Activated T-helper 1 cell treated with anti-CD3 and anti-CD28 coated beads, Interleukin-12 subunit alpha, Interleukin-12 subunit beta, Interleukin-2, Interleukin-4 antibody, amounts not matched to agents 30 ng/mL and 10 ng/mL and 1 ng/mL, durations not matched to agents 14 hours and 24 hours and 36 hours (primary cell): ENCODE measurements at regions of chr17 and their contacts with region 1.

Region 1: GRCh38 chr17:56779898-56780733 is 53.6 kb downstream of the C17orf67 start:
- DNase-seq: peak; percentile 87
- H3K4me3 Mint-ChIP-seq: peak overlapping the region; percentile 84
- H3K27ac Mint-ChIP-seq: peak overlapping the region; percentile 85
- H3K4me1 Mint-ChIP-seq: peaks cover 25% of the 10 kb centered on the region
- H3K27me3 Mint-ChIP-seq: no peaks in the 10 kb centered on the region

Region 2: DNA sequence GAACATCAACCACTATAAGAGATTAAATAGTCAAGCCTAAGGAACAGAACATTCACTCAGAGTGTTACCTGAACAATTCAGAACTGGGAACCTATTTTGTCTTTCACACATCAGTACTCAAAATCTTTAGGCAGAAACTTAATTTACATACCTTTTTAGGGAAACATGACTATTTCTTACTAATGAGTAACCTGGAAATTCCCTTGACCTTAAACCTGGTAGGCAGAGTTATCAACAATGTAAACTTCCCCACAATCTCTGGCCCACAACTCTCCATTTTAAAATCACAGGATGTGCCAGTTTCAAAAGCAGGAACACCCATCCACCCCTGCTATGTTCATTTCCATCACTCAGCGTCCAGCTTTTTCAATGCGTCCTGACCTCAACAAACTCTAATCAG is 759.7 kb before region 1 on chr17:
- intact Hi-C with region 1: loop called (anchors 10 kb)
- DNase-seq: no peak
- H3K4me3 Mint-ChIP-seq: no peak overlapping the region
- H3K27ac Mint-ChIP-seq: peak overlapping the region; percentile 27
- H3K4me1 Mint-ChIP-seq: peaks cover 30% of the 10 kb centered on the region
- H3K27me3 Mint-ChIP-seq: peaks cover 2% of the 10 kb centered on the region

Region 3: GRCh38 chr17:56592487-56593085 is 187.5 kb before region 1 on chr17:
- intact Hi-C with region 1: loop called (anchors 1 kb)
- DNase-seq: peak; percentile 39
- H3K4me3 Mint-ChIP-seq: peak overlapping the region; percentile 66
- H3K27ac Mint-ChIP-seq: no peak overlapping the region
- H3K4me1 Mint-ChIP-seq: peaks cover 17% of the 10 kb centered on the region
- H3K27me3 Mint-ChIP-seq: peaks cover 56% of the 10 kb centered on the region

Region 4: DNA sequence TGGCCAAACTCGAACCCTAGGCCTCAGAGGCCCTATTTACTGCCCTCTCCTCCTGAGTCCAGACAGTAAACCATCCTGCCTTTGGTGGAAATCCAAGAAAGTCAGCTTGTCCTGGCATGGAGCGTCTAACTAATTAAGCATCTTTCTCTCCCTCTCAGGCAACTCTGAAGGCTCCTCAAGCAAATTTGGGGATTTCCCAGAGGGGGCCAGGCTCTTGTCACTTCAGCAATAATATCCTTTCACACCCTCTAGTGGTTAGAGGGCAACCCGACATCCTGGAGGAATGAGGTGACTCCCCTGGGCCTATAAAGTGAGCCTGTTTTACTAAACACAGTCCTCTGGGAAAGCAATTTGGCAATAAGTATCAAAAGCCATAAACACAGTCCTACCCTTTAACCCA is 126.2 kb before region 1 on chr17:
- intact Hi-C with region 1: loop called (anchors 1 kb)
- DNase-seq: peak; percentile 52
- H3K4me3 Mint-ChIP-seq: no peak overlapping the region
- H3K27ac Mint-ChIP-seq: no peak overlapping the region
- H3K4me1 Mint-ChIP-seq: peaks cover 7% of the 10 kb centered on the region
- H3K27me3 Mint-ChIP-seq: peaks cover 27% of the 10 kb centered on the region

Region 5: DNA sequence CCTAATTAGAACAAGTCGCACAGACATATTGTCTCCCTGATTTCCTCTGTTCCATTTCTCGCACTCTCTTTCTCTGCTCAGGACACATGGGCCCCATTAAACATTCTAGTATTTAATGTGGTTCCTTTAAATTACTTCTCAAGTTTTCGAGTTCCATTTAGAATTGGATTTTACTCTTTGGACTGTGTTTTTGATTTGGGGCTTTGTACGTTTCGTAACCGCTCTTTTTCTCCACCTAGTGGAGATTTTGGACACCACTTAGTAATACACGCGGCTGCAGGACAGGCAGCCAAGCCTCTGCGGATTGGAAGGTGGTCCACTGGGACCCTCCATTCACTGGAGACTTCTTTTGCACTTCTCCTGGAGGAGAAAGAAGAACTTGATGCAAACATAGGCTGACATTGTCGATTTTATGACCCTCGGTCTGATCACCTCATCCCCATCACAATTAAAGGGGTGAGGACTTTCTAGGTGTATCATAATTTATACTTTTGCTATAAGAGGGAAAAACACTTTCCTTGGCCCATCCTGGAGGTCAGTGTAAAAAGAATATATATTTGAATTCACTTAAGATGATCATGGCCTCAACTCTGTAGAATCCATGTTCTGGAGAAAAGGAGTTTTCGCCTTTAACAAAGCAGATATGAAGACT is 100.9 kb before region 1 on chr17:
- intact Hi-C with region 1: loop called (anchors 1 kb)
- DNase-seq: no peak
- H3K4me3 Mint-ChIP-seq: no peak overlapping the region
- H3K27ac Mint-ChIP-seq: no peak overlapping the region
- H3K4me1 Mint-ChIP-seq: peaks cover 21% of the 10 kb centered on the region
- H3K27me3 Mint-ChIP-seq: peaks cover 42% of the 10 kb centered on the region

Region 6: GRCh38 chr17:56715613-56716357 is 64.3 kb before region 1 on chr17:
- intact Hi-C with region 1: loop called (anchors 1 kb)
- DNase-seq: peak; percentile 59
- H3K4me3 Mint-ChIP-seq: no peak overlapping the region
- H3K27ac Mint-ChIP-seq: no peak overlapping the region
- H3K4me1 Mint-ChIP-seq: no peaks in the 10 kb centered on the region
- H3K27me3 Mint-ChIP-seq: peaks cover 7% of the 10 kb centered on the region

Region 7: GRCh38 chr17:56762988-56763387 is 17.1 kb before region 1 on chr17:
- intact Hi-C with region 1: loop called (anchors 2 kb)
- DNase-seq: no peak
- H3K4me3 Mint-ChIP-seq: no peak overlapping the region
- H3K27ac Mint-ChIP-seq: no peak overlapping the region
- H3K4me1 Mint-ChIP-seq: peaks cover 11% of the 10 kb centered on the region
- H3K27me3 Mint-ChIP-seq: peaks cover 6% of the 10 kb centered on the region

Region 8: DNA sequence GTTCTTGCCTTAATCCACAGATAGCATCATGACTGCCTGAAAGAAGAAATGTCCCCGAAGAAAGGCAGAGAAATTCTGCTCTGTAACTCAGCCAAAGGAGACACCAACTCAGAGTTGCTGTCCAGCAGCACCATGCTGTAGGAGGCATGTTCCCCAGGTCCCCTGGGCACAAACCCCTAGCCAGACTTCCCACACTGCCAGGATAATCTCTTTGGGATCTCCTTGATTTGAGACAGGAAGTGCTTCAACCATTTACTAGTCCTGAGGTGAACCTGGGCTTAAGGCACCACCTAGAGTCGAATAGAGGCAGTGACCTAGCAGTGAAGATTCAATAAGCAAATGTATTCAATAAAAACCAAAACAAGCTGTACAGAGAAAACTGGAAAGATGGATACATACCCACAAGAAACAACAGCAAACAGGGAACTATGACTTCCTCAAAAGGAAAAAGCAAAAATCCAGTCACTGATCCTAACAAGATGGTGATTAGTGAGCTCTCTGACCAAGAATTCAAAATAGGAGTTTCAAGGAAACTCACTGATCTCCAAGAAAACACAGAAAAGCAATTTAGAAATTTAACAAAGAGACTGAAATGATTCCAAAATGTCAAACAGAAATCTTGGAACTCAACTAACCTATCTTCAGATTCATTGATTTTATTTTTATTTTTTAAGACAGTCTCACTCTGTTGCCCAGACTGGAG is 1392.4 kb after region 1 on chr17:
- intact Hi-C with region 1: no loop called
- DNase-seq: peak; percentile 38
- H3K4me3 Mint-ChIP-seq: no peak overlapping the region
- H3K27ac Mint-ChIP-seq: no peak overlapping the region
- H3K4me1 Mint-ChIP-seq: peaks cover 33% of the 10 kb centered on the region
- H3K27me3 Mint-ChIP-seq: peaks cover 6% of the 10 kb centered on the region